PC-3 (cell line): ENCODE measurements at regions of chr2 and their contacts with region 1.

Region 1: GRCh38 chr2:140344842-140345241 is 1564.7 kb upstream of the NXPH2 start:
- DNase-seq: peak; percentile 90
- ATAC-seq: peak; percentile 88
- H3K4me3 ChIP-seq: peak overlapping the region; percentile 58; the same call in 1 of the 2 replicates
- H3K27ac ChIP-seq: peak overlapping the region; percentile 93
- H3K4me1 ChIP-seq: peaks cover 18% of the 10 kb centered on the region
- H3K27me3 ChIP-seq: no peaks in the 10 kb centered on the region
- CTCF ChIP-seq: no peak

Region 2: DNA sequence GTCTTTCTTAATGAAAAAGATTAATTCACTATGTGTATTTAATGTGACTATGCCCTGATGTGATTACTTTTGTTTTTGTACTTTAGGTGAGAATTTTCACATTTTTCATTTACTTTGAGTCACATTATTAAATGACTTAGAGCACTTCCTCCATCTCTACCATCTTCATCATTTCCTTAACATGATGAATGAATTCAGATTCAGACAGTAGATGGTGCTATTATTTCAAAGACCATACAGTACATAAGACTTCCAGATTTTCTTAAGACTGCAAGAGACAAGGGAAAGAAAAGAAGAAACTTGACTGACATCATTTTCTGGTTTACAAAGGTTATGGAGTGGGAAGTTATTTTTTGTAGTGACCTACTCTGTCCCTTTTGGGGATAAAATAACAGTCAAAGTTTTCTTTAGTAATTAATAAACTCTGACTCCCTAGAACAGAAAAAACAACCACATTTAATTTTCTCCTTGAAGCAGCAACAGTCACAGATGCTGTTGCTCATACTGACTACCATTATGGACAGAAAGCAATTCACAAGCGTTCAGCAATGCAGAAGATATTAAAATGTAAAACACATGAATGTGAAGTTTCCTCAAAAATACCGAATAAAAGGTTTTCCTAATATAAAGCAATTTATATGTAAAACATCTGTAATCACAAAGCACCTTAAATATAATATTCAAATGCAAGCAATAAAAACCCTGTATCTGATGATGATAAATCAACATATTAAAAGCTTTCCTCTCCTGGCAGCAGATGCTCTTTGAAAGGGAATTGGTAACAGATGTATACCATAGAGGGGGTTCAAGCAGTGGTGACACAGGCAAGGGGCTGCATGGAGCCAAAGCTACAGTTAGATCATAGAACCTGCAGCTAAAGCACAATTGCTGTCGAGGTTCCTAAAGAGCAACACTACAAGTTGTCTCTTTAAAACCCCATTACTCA is 553.8 kb before region 1 on chr2:
- CTCF ChIA-PET with region 1: no interaction called
- POLR2A ChIA-PET with region 1: no interaction called
- intact Hi-C with region 1: loop called (anchors 5 kb)
- DNase-seq: peak; percentile 69
- ATAC-seq: peak; percentile 87
- H3K4me3 ChIP-seq: no peak overlapping the region
- H3K27ac ChIP-seq: no peak overlapping the region
- H3K4me1 ChIP-seq: no peaks in the 10 kb centered on the region
- H3K27me3 ChIP-seq: no peaks in the 10 kb centered on the region
- CTCF ChIP-seq: peak; percentile 73

Region 3: GRCh38 chr2:140108706-140109475 is 236.0 kb before region 1 on chr2:
- CTCF ChIA-PET with region 1: no interaction called
- POLR2A ChIA-PET with region 1: no interaction called
- intact Hi-C with region 1: loop called (anchors 5 kb)
- DNase-seq: peak; percentile 44
- ATAC-seq: peak; percentile 99
- H3K4me3 ChIP-seq: no peak overlapping the region
- H3K27ac ChIP-seq: no peak overlapping the region
- H3K4me1 ChIP-seq: peaks cover 10% of the 10 kb centered on the region; the same call in 1 of the 2 replicates
- H3K27me3 ChIP-seq: no peaks in the 10 kb centered on the region
- CTCF ChIP-seq: no peak

Region 4: GRCh38 chr2:140178234-140178633 is 166.6 kb before region 1 on chr2:
- CTCF ChIA-PET with region 1: no interaction called
- POLR2A ChIA-PET with region 1: no interaction called
- intact Hi-C with region 1: loop called (anchors 1 kb)
- DNase-seq: peak; percentile 88
- ATAC-seq: peak; percentile 87
- H3K4me3 ChIP-seq: peak overlapping the region; percentile 16; the same call in 1 of the 2 replicates
- H3K27ac ChIP-seq: peak overlapping the region; percentile 27; the same call in 1 of the 2 replicates
- H3K4me1 ChIP-seq: peaks cover 17% of the 10 kb centered on the region
- H3K27me3 ChIP-seq: no peaks in the 10 kb centered on the region
- CTCF ChIP-seq: no peak

Region 5: GRCh38 chr2:140199312-140199711 is 145.5 kb before region 1 on chr2:
- CTCF ChIA-PET with region 1: no interaction called
- POLR2A ChIA-PET with region 1: interaction called, 3 read pairs
- intact Hi-C with region 1: loop called (anchors 1 kb)
- DNase-seq: peak; percentile 63
- ATAC-seq: peak; percentile 96
- H3K4me3 ChIP-seq: no peak overlapping the region
- H3K27ac ChIP-seq: peak overlapping the region; percentile 38; the same call in 1 of the 2 replicates
- H3K4me1 ChIP-seq: peaks cover 8% of the 10 kb centered on the region; the same call in 1 of the 2 replicates
- H3K27me3 ChIP-seq: no peaks in the 10 kb centered on the region
- CTCF ChIP-seq: no peak

Region 6: GRCh38 chr2:140863713-140864112 is 518.9 kb after region 1 on chr2:
- CTCF ChIA-PET with region 1: no interaction called
- POLR2A ChIA-PET with region 1: no interaction called
- intact Hi-C with region 1: loop called (anchors 5 kb)
- DNase-seq: peak; percentile 76
- ATAC-seq: peak; percentile 48
- H3K4me3 ChIP-seq: no peak overlapping the region
- H3K27ac ChIP-seq: no peak overlapping the region
- H3K4me1 ChIP-seq: no peaks in the 10 kb centered on the region
- H3K27me3 ChIP-seq: no peaks in the 10 kb centered on the region
- CTCF ChIP-seq: peak; percentile 74